CD8-positive, alpha-beta memory T cell (primary cell): ENCODE measurements at regions of chr22 and their contacts with region 1.

Region 1: DNA sequence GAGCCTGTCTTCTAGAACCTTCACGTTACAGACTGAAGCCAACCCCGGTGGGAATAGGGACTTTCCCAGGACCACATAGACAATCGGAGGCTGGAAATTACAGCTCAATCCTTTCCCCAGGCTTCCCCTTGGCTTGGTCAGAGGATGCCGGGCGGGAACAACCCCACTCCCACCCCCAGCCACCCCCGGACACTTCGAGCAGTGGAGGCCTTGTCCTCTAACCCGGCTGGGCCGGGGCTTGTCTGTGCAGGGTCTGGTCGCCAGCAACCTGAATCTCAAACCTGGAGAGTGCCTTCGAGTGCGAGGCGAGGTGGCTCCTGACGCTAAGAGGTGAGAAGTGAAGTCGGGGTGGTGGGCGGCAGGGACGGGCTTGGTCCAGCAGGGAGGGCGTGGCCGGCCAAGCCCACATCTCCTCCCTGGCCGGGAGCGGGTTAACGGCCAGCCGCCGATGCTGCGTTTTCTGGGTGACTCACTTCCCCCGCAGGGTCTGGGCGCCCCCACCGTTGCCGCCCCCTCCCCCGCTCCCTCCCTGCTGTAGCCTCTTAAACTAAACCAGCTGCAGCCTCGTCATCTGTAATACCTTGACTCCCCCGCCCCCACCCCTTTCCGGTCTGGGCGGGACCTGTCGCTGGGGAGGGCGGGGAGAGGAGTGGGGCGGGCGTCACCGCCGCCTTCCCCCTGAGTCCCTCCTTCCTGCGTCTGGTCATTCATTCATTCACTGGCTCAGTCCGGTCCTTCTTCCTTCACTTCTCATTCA is 1.5 kb downstream of the LGALS1 start:
- DNase-seq: peak; percentile 88 to 96 (median 91)
- H3K4me3 ChIP-seq: peak overlapping the region; percentile 68
- H3K4me3 Mint-ChIP-seq: peak overlapping the region; percentile 85 to 97 (median 89)
- H3K27ac ChIP-seq: peak overlapping the region; percentile 83
- H3K27ac Mint-ChIP-seq: peak overlapping the region; percentile 93 to 100 (median 99)
- H3K4me1 ChIP-seq: peaks cover 45% of the 10 kb centered on the region
- H3K4me1 Mint-ChIP-seq: peaks cover 44 to 69% (median 45%) of the 10 kb centered on the region in 3 donors
- H3K27me3 ChIP-seq: no peaks in the 10 kb centered on the region
- H3K27me3 Mint-ChIP-seq: no peaks in the 10 kb centered on the region

Region 2: GRCh38 chr22:37623075-37624016 is 53.6 kb before region 1 on chr22:
- CTCF ChIA-PET with region 1: interaction called, 32 read pairs
- POLR2A ChIA-PET with region 1: interaction called, 5 read pairs
- DNase-seq: peak; percentile 69 to 85 (median 70)
- H3K4me3 ChIP-seq: no peak overlapping the region
- H3K4me3 Mint-ChIP-seq: peak overlapping the region in 6 of 7 donors; percentile 35 to 87 (median 63)
- H3K27ac ChIP-seq: no peak overlapping the region
- H3K27ac Mint-ChIP-seq: peak overlapping the region; percentile 90 to 98 (median 96)
- H3K4me1 ChIP-seq: peaks cover 52% of the 10 kb centered on the region
- H3K4me1 Mint-ChIP-seq: peaks cover 33 to 52% (median 37%) of the 10 kb centered on the region in 3 donors
- H3K27me3 ChIP-seq: no peaks in the 10 kb centered on the region
- H3K27me3 Mint-ChIP-seq: no peaks in the 10 kb centered on the region

Region 3: GRCh38 chr22:37658133-37659065 is 18.5 kb before region 1 on chr22 and contains the start of gene PDXP:
- CTCF ChIA-PET with region 1: interaction called, 83 read pairs
- POLR2A ChIA-PET with region 1: interaction called, 59 read pairs
- DNase-seq: peak; percentile 96 to 98 (median 97)
- H3K4me3 ChIP-seq: peak within 1 kb of the TSS; percentile 69
- H3K4me3 Mint-ChIP-seq: peak within 1 kb of the TSS; percentile 85 to 91 (median 88)
- H3K27ac ChIP-seq: peak within 1 kb of the TSS; percentile 52
- H3K27ac Mint-ChIP-seq: peak within 1 kb of the TSS; percentile 66 to 97 (median 94)
- H3K4me1 ChIP-seq: peaks cover 31% of the 10 kb centered on the region
- H3K4me1 Mint-ChIP-seq: peaks cover 34 to 44% (median 36%) of the 10 kb centered on the region in 3 donors
- H3K27me3 ChIP-seq: no peaks in the 10 kb centered on the region
- H3K27me3 Mint-ChIP-seq: no peaks in the 10 kb centered on the region
- total RNA-seq, gene PDXP: 36.0 to 37.8 TPM

Region 4: DNA sequence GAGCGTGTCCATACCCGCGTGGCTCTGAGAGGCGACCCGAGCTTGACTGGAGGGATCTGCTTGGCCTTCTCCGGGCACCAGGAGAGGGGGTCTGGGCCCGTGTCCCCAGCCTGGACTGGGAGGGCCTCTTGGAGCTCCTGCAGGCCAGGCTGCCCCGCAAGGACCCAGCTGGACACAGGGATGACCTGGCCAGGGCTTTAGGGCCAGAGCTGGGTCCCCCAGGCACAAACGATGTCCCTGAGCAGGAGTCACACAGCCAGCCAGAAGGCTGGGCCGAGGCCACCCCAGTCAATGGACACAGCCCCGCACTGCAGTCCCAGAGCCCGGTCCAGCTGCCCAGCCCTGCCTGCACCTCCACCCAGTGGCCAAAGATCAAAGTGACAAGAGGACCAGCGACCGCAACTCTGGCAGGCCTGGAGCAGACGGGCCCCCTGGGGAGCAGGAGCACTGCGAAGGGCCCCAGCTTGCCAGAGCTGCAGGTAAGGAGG is 58.1 kb after region 1 on chr22:
- CTCF ChIA-PET with region 1: no interaction called
- POLR2A ChIA-PET with region 1: no interaction called
- DNase-seq: no peak
- H3K4me3 ChIP-seq: no peak overlapping the region
- H3K4me3 Mint-ChIP-seq: no peak overlapping the region
- H3K27ac ChIP-seq: no peak overlapping the region
- H3K27ac Mint-ChIP-seq: no peak overlapping the region
- H3K4me1 ChIP-seq: no peaks in the 10 kb centered on the region
- H3K4me1 Mint-ChIP-seq: no peaks in the 10 kb centered on the region
- H3K27me3 ChIP-seq: no peaks in the 10 kb centered on the region
- H3K27me3 Mint-ChIP-seq: peaks cover 4 to 9% of the 10 kb centered on the region in 2 donors